CD14-positive monocyte (primary cell): ENCODE measurements at regions of chr14 and their contacts with region 1.

Region 1: DNA sequence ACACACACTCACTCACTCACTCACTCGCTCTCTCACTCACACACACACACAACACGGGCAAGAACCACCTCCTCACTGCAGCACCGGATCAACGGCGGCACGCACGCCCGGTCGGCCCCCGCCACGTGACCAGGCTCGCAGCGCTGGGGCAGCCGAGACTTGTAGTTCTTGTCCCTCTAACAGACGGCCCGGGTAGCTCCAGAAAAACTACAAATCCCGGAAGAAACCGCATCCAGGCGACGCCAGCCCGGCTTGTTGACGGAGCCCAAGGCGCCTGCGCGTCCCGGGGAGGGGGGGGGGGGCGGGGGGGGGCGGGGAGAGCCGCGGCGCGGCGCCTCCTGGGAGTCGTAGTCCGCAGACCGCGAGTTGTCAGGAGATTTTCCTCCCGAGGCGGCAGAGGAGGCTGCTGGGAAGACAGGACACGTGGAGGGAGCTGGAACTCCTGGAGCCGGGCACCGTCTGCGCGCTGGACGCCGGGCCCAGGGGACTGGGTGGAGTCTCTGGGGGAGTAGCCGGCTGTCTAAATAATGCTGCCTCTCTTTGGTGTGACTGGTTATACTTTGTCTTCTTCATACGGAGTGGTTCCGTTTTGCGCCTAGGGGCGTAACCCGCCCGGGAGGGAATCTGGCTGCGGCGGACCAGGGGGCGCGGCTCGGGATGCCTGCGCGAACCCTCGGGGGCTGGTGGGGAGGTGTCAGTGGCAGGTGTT is at the start of gene MAX:
- DNase-seq: peak; percentile 98 to 99 (median 98)
- H3K4me3 ChIP-seq: peak within 1 kb of the TSS; percentile 88 to 94 (median 89)
- H3K4me3 Mint-ChIP-seq: peak within 1 kb of the TSS; percentile 99
- H3K27ac ChIP-seq: peak within 1 kb of the TSS; percentile 92 to 97
- H3K27ac Mint-ChIP-seq: peak within 1 kb of the TSS; percentile 93 to 99 (median 97)
- H3K4me1 ChIP-seq: peaks cover 36 to 48% of the 10 kb centered on the region in 2 donors
- H3K4me1 Mint-ChIP-seq: peaks cover 35% of the 10 kb centered on the region
- H3K27me3 ChIP-seq: no peaks in the 10 kb centered on the region
- H3K27me3 Mint-ChIP-seq: no peaks in the 10 kb centered on the region
- CTCF ChIP-seq: no peak
- polyA plus RNA-seq, gene MAX: 78.2 to 87.0 (median 81.5) TPM

Region 2: DNA sequence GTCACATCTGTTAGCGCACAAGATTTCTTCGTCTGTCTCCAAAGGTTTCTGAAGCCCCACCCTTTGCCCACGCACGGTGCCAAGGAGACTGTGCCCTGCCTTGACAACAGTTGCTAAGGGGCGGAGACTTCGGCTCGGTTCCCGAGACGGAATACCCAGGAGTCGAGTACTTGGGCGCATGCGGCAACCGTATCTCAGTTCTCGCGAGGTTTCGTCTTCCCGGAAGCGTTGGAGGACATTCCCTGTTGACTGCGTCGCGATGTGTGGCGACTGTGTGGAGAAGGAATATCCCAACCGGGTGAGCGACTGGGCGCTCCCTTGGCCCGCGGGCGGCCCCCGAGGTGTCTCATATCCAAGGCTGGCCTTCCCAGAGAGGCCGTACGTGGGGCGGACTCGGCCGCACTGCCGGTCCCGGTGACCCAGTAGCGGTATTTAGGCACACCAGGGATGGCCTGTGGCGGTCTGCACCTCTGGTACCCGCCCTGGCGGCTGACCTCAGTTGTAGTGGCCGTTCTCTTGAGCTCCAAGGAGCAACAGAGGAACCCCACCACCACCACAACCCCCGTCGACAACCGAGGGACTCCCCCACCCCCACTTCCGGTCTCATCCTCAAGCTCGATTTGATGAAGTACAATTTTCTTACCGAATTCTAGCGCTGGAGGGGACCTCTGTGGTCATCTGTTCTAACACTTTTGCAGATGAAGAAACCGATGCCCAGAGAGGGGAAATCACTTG is 188.2 kb before region 1 on chr14 and contains the start of gene CHURC1:
- intact Hi-C with region 1: loop called (anchors 10 kb)
- DNase-seq: peak; percentile 95 to 98 (median 97)
- H3K4me3 ChIP-seq: peak within 1 kb of the TSS; percentile 89 to 97 (median 93)
- H3K4me3 Mint-ChIP-seq: peak within 1 kb of the TSS; percentile 81 to 92
- H3K27ac ChIP-seq: peak within 1 kb of the TSS; percentile 93 to 98
- H3K27ac Mint-ChIP-seq: peak within 1 kb of the TSS; percentile 92 to 97 (median 95)
- H3K4me1 ChIP-seq: peaks cover 21 to 24% of the 10 kb centered on the region in 2 donors
- H3K4me1 Mint-ChIP-seq: peaks cover 30% of the 10 kb centered on the region
- H3K27me3 ChIP-seq: peaks cover 0 to 2% of the 10 kb centered on the region in 2 donors
- H3K27me3 Mint-ChIP-seq: peaks cover 3 to 7% (median 6%) of the 10 kb centered on the region in 3 donors
- CTCF ChIP-seq: no peak
- polyA plus RNA-seq, gene CHURC1: 31.1 to 98.3 (median 81.2) TPM

Region 3: DNA sequence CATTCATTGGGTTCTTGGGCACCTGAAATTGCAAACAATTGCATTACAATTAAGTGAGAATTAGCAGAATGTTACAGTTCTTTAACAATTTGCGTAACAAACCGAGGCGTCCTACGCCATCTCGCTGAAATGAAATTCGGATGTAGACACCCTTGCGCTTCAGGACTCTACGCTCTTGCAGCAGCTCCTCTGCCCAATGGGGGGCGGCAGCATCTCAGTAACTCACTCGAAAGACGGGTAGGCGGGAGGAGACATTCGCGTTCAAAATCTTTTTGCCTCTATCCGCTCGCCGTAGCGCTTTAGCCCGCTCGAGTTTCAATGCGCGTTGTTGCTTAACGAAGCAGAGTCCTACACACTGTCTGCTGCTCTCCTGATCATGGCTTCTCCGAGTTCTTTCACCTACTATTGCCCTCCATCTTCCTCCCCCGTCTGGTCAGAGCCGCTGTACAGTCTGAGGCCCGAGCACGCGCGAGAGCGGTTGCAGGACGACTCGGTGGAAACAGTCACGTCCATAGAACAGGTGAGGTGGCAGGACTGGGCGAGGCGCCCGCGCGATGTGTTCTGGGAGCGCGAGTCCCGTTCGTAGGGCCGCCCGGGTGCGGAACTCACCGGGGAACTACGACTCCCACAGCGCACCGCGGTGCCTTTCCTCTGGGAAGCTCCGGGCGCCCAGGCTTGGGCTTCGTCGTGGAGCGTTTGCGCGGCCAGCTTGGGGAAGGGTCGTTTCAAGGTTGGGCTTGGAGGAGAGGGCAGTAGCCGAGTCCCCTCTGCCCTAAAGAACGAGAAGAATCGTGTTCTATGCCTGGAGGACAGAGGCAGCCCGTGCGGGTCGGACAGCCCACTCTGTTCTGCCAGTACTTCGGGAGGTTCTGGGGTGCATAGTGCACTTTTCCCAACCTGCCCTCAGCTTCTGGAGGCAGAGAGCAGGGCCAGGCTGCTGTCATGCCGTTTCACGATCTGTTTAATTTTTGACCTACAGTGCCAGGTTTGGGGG is 115.7 kb before region 1 on chr14 and contains the start of gene FNTB:
- intact Hi-C with region 1: loop called (anchors 5 kb)
- DNase-seq: peak; percentile 88 to 93 (median 91)
- H3K4me3 ChIP-seq: peak within 1 kb of the TSS; percentile 76 to 97 (median 82)
- H3K4me3 Mint-ChIP-seq: peak within 1 kb of the TSS; percentile 100
- H3K27ac ChIP-seq: peak within 1 kb of the TSS; percentile 57 to 83
- H3K27ac Mint-ChIP-seq: peak within 1 kb of the TSS; percentile 95 to 99 (median 97)
- H3K4me1 ChIP-seq: peaks cover 42 to 56% of the 10 kb centered on the region in 2 donors
- H3K4me1 Mint-ChIP-seq: peaks cover 53% of the 10 kb centered on the region
- H3K27me3 ChIP-seq: no peaks in the 10 kb centered on the region
- H3K27me3 Mint-ChIP-seq: peaks cover 1 to 14% (median 3%) of the 10 kb centered on the region in 3 donors
- CTCF ChIP-seq: no peak
- polyA plus RNA-seq, gene FNTB: 12.3 to 14.2 (median 14.1) TPM

Region 4: DNA sequence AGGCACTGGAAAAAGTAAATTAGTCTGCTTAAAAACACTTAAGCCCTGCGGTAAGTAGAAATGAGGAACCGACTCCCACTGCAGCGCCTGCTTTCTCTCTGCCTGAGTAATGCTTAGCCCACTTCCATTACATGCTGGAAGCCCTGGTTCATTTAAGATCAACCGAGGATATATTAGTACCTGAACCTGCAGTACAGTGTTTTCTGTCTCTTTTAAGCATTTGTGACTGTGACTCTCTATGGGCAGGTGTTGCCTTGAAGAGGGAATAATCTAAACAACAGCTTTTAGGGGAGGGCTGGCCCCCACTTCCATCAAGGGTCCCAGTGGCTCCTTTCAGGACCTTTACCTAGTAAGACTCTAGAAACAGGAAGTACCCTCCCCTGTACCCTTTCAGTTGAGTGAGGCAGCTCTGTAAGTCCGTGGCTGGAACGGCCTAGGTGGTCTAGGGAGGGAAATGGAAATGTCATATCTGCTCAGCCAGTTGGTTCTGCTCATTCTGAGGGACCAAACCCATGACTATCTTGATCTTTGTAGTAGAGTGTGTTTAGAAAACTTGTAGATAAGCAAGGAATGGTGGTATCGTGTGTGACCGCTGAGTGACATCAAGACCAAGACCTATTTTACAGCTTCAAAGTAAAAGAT is 59.7 kb before region 1 on chr14:
- intact Hi-C with region 1: loop called in 1 of 2 experiments (anchors 5 kb)
- DNase-seq: peak; percentile 61 to 78 (median 74)
- H3K4me3 ChIP-seq: peak overlapping the region in 1 of 3 experiments; percentile 27
- H3K4me3 Mint-ChIP-seq: peak overlapping the region; percentile 9 to 21
- H3K27ac ChIP-seq: peak overlapping the region; percentile 64 to 68
- H3K27ac Mint-ChIP-seq: peak overlapping the region; percentile 77 to 89 (median 86)
- H3K4me1 ChIP-seq: peaks cover 53 to 57% of the 10 kb centered on the region in 2 donors
- H3K4me1 Mint-ChIP-seq: peaks cover 62% of the 10 kb centered on the region
- H3K27me3 ChIP-seq: no peaks in the 10 kb centered on the region
- H3K27me3 Mint-ChIP-seq: peaks cover 0 to 2% (median 0%) of the 10 kb centered on the region in 3 donors
- CTCF ChIP-seq: no peak

Region 5: DNA sequence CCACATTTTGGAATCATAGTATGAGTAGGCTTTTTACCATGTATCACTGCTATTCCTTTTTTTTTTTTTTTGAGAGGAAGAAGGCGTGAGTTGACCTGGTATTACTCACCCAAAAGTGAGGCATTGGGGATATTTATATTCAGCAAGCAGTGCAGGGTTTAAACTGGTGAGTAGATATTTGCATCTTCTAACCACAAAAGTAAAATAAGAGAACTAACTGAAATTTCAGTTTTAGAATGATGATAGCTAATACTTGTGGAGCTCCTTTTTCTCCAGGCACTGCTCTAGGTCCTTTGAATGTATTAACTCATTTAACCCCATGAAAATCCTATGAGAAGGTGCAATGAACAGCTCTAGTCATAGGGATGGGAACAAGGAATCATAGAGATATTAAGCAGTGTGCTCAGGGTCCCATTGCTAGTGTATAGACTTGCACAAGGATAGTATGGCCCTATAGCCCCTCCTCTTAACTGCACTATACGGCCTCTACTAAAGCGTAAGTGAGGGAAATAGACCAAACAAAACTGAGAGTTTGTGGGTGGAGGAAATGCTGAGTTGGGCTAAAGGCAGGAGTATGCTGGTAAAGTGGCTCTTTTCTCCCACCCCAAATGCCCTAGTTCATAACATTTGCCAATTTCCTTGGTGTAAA is 104.0 kb after region 1 on chr14:
- intact Hi-C with region 1: loop called in 1 of 2 experiments (anchors 5 kb)
- DNase-seq: peak; percentile 76 to 91 (median 77)
- H3K4me3 ChIP-seq: peak overlapping the region in 1 of 3 experiments; percentile 33
- H3K4me3 Mint-ChIP-seq: no peak overlapping the region
- H3K27ac ChIP-seq: peak overlapping the region in 1 of 2 donors; percentile 84
- H3K27ac Mint-ChIP-seq: peak overlapping the region; percentile 75 to 92 (median 82)
- H3K4me1 ChIP-seq: peaks cover 63 to 69% of the 10 kb centered on the region in 2 donors
- H3K4me1 Mint-ChIP-seq: peaks cover 63% of the 10 kb centered on the region
- H3K27me3 ChIP-seq: no peaks in the 10 kb centered on the region
- H3K27me3 Mint-ChIP-seq: peaks cover 0 to 3% (median 2%) of the 10 kb centered on the region in 3 donors
- CTCF ChIP-seq: no peak